Naive thymus-derived CD8-positive, alpha-beta T cell (primary cell): ENCODE measurements at regions of chr15 and their contacts with region 1.

Region 1: DNA sequence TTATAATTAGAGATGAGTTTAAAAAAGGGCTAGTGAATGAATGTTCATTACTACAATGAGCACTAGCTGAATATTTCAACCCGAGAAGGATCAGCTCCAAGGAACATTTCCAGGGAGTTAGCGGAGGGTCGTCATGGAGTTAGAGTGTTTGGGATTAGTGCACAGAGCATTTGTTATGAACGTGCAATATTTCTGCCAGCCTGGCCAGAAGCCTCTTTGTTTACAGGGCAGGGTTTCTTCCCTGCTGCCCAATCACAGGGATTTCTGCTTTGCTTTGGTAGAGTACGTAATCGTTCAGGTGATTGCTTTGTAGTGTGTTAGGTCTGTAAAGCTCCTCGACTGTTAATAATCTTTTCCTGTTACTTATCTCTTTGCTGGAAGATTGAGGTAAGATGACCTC is 5.9 kb downstream of the CGNL1 start:
- DNase-seq: no peak
- ATAC-seq: no peak
- H3K4me3 Mint-ChIP-seq: no peak overlapping the region
- H3K27ac Mint-ChIP-seq: no peak overlapping the region
- H3K4me1 Mint-ChIP-seq: peaks cover 0 to 4% (median 3%) of the 10 kb centered on the region in 4 donors
- H3K27me3 Mint-ChIP-seq: peaks cover 21 to 54% (median 29%) of the 10 kb centered on the region in 5 donors

Region 2: DNA sequence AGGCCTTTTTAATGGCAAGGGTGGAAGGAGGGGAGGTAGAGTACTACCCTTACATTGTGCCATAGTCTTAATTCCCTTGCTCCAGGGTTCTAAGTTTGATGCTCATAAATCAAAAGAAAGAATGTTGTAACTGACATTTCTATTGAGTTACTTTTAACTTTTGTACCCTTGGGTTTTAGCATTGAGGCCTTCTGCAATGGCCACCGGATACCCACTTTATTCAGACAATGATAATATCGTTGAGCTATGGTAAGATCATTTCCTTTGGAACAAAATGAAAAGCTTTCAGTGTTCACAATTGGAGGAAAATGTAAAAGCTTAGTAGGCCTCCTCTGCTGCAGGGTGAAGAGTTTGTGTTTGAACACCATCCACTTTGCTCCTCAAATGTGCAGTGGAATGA is 10.8 kb after region 1 on chr15:
- POLR2A ChIA-PET with region 1: interaction called, 11 read pairs
- DNase-seq: no peak
- ATAC-seq: no peak
- H3K4me3 Mint-ChIP-seq: no peak overlapping the region
- H3K27ac Mint-ChIP-seq: no peak overlapping the region
- H3K4me1 Mint-ChIP-seq: no peaks in the 10 kb centered on the region
- H3K27me3 Mint-ChIP-seq: peaks cover 0 to 14% (median 0%) of the 10 kb centered on the region in 5 donors